Dorsolateral prefrontal cortex (tissue), 120 donors: ENCODE measurements at regions of chr14 and their contacts with region 1.

Region 1: GRCh38 chr14:64503478-64504309 is at the start of gene ZBTB25:
- DNase-seq: peak; percentile 83 to 96 (median 91)
- H3K4me3 ChIP-seq: peak within 1 kb of the TSS; percentile 60 to 98 (median 92)
- H3K27ac ChIP-seq: peak within 1 kb of the TSS; percentile 95 to 100 (median 99)
- H3K27me3 ChIP-seq: no peaks in the 10 kb centered on the region
- CTCF ChIP-seq: peak in 18 of 56 donors; percentile 4 to 39 (median 20)
- total RNA-seq, gene ZBTB25: 17.5 to 36.7 (median 25.7) TPM

Region 2: GRCh38 chr14:64025479-64025878 is 478.2 kb before region 1 on chr14:
- intact Hi-C with region 1: no loop called
- DNase-seq: no peak
- H3K4me3 ChIP-seq: no peak overlapping the region
- H3K27ac ChIP-seq: no peak overlapping the region
- H3K27me3 ChIP-seq: no peaks in the 10 kb centered on the region
- CTCF ChIP-seq: no peak

Region 3: DNA sequence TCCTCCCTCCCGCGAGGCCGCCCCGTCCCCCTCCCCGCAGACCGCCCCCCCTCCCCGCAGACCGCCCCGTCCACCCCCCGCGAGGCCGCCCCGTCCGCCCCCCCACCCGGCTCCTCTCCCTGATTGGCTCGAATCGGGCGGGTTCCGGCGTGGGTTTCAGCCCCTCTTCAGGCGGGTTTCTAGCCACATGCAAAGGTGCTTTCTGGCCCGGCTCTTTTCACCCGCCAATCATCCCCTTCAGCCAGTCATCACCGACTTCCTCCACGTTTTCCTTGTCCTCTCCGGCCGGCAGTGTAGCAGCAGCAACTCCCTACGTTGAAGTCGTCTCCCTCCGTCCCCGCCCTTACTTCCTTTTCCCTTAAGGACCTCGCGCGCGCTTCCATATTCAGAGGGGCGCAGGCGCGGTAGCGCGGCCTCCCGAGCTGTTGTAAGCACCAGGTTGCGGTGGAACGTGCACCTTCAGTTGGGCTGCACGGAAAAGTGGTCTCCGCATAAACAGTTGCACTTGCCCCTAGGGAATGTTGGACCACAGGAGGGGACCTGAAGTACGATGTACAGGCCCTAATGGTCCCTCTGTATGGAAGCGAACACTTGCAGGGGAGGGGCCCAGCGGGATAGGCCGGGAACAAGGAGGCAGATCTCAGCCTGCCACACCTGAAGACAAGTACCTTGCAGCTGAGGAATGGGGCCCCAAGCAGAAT is 164.9 kb before region 1 on chr14:
- intact Hi-C with region 1: loop called (anchors 10 kb)
- DNase-seq: peak; percentile 74 to 97 (median 94)
- H3K4me3 ChIP-seq: peak overlapping the region; percentile 58 to 95 (median 83)
- H3K27ac ChIP-seq: peak overlapping the region; percentile 1 to 93 (median 83)
- H3K27me3 ChIP-seq: no peaks in the 10 kb centered on the region
- CTCF ChIP-seq: peak in 3 of 56 donors; percentile 12 to 25 (median 23)

Region 4: DNA sequence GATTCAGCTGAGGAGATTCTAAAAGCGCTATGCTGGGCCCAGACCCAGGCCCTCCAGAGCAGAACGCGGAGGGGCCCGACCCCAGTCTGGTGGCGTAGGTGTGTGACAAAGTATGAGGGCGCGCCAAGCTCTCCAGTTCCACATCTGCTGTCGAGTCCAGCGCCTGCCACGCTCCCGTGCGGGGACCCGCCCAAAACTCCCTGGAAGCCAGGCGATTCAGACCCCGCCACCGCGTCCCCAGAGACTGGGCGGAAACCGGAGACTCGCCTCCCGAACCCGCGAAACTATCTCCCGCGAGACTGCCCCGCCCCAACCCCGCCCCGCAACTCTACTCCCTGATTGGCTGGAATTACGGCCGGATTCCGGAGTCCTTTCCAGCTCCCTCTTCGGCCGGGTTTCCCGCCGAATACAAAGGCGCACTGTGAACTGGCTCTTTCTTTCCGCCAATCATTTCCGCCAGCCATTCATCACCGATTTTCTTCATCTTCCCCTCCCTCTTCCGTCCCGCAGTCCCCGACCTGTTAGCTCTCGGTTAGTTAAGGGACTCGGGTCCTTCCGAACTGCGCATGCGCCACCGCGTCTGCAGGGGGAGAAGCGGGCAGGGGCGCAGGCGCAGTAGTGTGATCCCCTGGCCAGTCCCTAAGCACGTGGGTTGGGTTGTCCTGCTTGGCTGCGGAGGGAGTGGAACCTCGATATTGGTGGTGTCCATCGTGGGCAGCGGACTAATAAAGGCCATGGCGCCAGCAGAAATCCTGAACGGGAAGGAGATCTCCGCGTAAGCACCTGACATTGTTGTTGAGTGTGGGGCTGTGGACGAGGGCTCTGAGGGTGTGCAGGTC is 115.8 kb before region 1 on chr14 and contains the start of gene MTHFD1:
- intact Hi-C with region 1: loop called (anchors 5 to 10 kb)
- DNase-seq: peak; percentile 92 to 98 (median 97)
- H3K4me3 ChIP-seq: peak within 1 kb of the TSS; percentile 55 to 98 (median 86)
- H3K27ac ChIP-seq: peak within 1 kb of the TSS in 56 of 59 donors; percentile 4 to 92 (median 82)
- H3K27me3 ChIP-seq: no peaks in the 10 kb centered on the region
- CTCF ChIP-seq: peak in 13 of 56 donors; percentile 6 to 37 (median 21)
- total RNA-seq, gene MTHFD1: 41.0 to 93.1 (median 63.8) TPM

Region 5: DNA sequence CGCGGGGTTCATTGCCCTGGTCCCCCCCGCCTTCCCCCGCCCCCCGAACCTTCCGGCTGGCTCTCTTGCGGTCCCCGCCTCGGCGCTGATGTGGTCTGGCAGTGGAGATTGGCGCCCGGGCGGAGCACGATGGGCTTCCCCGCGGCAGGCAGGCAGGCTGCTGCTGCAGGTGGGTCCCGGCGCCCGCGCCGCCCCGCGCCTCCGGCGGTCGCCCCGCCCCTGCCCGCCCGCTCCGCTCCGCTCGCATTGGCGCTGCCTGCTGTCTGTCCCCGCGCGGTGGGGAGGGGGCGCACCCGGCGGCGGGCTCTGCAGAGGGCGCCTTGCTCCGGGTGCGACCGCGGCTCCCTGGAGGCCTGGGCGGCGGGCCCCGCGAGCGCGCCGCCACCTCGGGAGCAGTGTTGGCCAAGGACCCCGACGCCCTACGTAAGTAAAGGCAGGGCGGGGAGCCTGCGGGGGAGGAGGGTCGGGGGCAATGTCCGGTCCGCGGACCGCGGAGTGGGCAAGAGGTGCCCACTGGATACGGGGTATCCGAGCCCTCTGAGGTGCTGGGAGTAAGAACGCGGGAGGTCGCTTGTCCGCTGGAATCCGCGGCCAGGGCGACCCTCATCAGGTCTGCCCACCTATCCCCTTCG is 38.4 kb before region 1 on chr14 and contains the start of gene AKAP5:
- intact Hi-C with region 1: loop called in 1 of 2 experiments (anchors 5 kb)
- DNase-seq: peak; percentile 52 to 85 (median 71)
- H3K4me3 ChIP-seq: peak within 1 kb of the TSS; percentile 55 to 92 (median 79)
- H3K27ac ChIP-seq: peak within 1 kb of the TSS in 58 of 59 donors; percentile 10 to 94 (median 85)
- H3K27me3 ChIP-seq: no peaks in the 10 kb centered on the region
- CTCF ChIP-seq: peak in 11 of 56 donors; percentile 6 to 59 (median 17)
- total RNA-seq, gene AKAP5: 4.0 to 42.2 (median 22.1) TPM

Region 6: DNA sequence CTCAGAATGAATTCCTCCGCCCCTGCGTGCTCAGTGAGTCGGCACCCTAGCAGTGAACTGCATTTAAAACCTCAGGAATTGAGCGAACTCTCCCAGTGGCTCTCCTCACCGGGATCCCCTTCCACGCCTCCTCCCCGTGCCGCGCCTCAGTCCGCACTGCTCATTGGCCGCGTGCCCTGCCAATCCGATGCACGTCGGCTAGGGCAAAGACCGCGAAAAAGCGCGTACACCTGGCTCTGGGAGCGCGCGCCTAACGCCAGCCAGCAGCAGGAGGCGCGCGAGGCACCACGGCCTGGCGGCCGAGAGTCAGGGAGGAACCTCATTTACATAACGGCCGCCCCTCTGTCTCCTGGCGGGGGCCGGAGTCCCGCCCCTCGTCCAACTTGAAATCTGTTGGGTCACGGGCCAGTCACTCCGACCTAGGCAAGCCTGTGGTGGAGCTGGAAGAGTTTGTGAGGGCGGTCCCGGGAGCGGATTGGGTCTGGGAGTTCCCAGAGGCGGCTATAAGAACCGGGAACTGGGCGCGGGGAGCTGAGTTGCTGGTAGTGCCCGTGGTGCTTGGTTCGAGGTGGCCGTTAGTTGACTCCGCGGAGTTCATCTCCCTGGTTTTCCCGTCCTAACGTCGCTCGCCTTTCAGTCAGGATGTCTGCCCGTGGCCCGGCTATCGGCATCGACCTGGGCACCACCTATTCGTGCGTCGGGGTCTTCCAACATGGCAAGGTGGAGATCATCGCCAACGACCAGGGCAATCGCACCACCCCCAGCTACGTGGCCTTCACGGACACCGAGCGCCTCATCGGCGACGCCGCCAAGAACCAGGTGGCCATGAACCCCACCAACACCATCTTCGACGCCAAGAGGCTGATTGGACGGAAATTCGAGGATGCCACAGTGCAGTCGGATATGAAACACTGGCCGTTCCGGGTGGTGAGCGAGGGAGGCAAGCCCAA is 36.8 kb after region 1 on chr14 and contains the start of gene HSPA2:
- intact Hi-C with region 1: loop called (anchors 1 to 2 kb)
- DNase-seq: peak; percentile 93 to 99 (median 99)
- H3K4me3 ChIP-seq: peak within 1 kb of the TSS; percentile 47 to 82 (median 70)
- H3K27ac ChIP-seq: peak within 1 kb of the TSS in 56 of 59 donors; percentile 33 to 91 (median 82)
- H3K27me3 ChIP-seq: peaks cover 0 to 15% (median 0%) of the 10 kb centered on the region in 45 donors
- CTCF ChIP-seq: peak; percentile 47 to 98 (median 88)
- total RNA-seq, gene HSPA2: 15.2 to 536 (median 124) TPM

Region 7: DNA sequence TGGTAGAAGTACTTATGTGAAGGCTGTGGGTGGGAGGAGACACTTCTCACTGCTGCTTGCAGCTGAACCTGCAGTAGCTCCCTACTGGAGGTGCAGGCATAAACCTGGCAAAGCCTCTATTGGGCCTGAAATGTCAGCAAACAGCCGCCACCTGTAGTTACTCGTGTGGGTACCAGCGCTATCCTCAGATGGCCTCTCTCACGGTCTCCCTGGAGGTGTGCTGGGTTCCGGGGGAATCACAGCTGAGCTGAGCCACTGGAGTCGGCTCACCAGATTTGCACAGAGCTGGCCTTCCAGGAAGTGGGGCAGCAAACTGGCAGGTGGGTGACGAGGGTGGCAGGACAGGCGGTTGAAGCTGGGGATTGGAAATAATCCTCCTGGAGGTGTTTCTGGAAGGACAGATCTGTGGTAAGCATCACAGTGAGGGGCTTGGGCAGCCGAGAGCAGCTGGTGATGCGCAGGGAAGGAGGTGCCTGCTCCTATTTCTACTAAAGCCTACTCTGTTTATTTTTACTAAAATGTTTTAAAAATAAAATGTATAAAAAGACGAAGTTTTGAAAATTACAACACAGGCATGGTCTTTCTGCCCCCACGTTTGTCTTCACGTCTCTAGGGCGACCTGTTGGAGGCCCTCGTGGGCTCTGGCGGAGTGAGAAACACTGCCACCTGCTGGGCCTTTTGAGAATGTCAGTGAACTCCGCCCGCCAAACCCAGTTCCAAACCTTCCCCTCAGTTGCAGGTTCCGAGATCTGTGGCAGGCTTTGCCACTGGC is 132.7 kb after region 1 on chr14:
- intact Hi-C with region 1: loop called (anchors 10 kb)
- DNase-seq: peak; percentile 60 to 84 (median 70)
- H3K4me3 ChIP-seq: peak overlapping the region in 26 of 59 donors; percentile 2 to 50 (median 17)
- H3K27ac ChIP-seq: peak overlapping the region in 43 of 59 donors; percentile 2 to 80 (median 46)
- H3K27me3 ChIP-seq: no peaks in the 10 kb centered on the region
- CTCF ChIP-seq: peak; percentile 87 to 100 (median 96)

Region 8: DNA sequence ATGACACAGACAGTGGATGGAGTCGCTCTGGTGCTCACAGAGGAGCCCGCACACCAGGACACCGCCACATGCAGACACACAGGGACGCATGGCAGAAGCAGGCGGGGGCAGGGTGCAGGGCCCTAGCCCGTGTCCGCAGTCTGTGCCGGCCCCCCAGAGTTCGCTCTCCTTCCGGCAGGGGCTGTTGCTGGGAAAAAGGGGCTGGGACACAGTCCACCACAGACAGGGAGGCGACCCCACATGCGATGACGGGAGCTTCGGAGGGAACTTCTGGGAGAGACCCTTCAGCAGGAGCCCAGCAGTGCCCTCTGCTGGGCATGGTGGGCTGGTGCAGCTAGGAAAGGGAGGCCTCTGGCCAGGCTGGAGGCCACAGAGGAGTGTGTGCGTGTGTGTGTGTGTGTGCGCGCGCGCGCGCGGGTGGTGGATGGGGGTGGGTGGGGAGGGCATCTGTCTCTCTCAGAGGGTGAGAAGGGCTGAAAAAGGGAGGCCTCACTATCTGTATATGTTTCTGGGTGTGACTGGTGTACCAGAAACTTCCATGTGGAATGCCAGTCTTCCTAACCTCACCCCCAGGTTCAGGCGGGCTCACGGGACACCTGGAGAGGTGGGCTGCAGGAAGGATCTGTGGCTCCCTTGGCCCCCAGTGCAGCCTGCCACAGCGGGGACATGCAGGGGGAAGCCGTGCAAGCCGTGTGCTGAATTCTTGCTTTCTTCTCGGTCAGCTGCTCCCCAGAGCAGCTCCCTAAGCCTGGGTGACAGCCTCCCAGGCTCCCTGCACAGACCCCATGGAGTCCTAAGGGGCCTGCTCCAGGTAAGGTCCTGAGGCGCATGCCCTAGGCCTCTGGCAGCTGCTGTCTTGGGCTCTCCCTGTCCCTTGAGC is 261.2 kb after region 1 on chr14:
- intact Hi-C with region 1: loop called in 1 of 2 experiments (anchors 10 kb)
- DNase-seq: peak; percentile 51 to 86 (median 67)
- H3K4me3 ChIP-seq: peak overlapping the region in 58 of 59 donors; percentile 8 to 66 (median 44)
- H3K27ac ChIP-seq: peak overlapping the region in 54 of 59 donors; percentile 34 to 93 (median 82)
- H3K27me3 ChIP-seq: no peaks in the 10 kb centered on the region
- CTCF ChIP-seq: peak; percentile 65 to 97 (median 89)